Activated B cell treated with CpG ODN at 0.5 μM for 24 hours (primary cell): ENCODE measurements at regions of chr3 and their contacts with region 1.

Region 1: GRCh38 chr3:50971487-50971924 is 296.8 kb downstream of the DOCK3 start:
- DNase-seq: no peak
- ATAC-seq: peak; percentile 67
- H3K4me3 Mint-ChIP-seq: no peak overlapping the region
- H3K27ac Mint-ChIP-seq: no peak overlapping the region
- H3K4me1 Mint-ChIP-seq: peaks cover 2% of the 10 kb centered on the region
- H3K27me3 Mint-ChIP-seq: no peaks in the 10 kb centered on the region
- CTCF ChIP-seq: peak; percentile 95

Region 2: DNA sequence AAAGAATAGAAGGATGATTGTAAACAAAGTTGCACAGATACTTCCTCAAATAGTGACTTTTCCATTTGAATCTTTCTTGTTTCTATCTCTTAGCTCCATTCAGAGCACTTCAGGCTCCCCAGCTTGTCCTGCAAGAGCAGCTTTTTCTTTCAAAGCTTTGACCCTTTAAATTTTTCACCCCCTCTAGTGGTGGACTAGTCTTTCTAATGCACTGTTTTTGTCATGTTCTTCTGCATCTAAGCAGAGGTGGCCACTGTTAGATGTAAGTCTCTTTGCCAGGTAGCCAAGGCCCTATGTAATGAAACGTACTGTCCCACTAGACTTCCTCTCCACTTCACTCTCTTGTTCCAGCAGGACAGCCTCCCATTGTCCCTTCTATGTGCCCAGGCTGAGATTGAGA is 339.5 kb after region 1 on chr3:
- CTCF ChIA-PET with region 1: interaction called, 3 read pairs
- POLR2A ChIA-PET with region 1: no interaction called
- intact Hi-C with region 1: loop called (anchors 2 kb)
- DNase-seq: no peak
- ATAC-seq: no peak
- H3K4me3 Mint-ChIP-seq: no peak overlapping the region
- H3K27ac Mint-ChIP-seq: no peak overlapping the region
- H3K4me1 Mint-ChIP-seq: no peaks in the 10 kb centered on the region
- H3K27me3 Mint-ChIP-seq: peaks cover 10% of the 10 kb centered on the region
- CTCF ChIP-seq: no peak

Region 3: GRCh38 chr3:51371943-51372557 is 400.5 kb after region 1 on chr3:
- CTCF ChIA-PET with region 1: interaction called, 11 read pairs
- POLR2A ChIA-PET with region 1: no interaction called
- intact Hi-C with region 1: no loop called
- DNase-seq: no peak
- ATAC-seq: no peak
- H3K4me3 Mint-ChIP-seq: no peak overlapping the region
- H3K27ac Mint-ChIP-seq: no peak overlapping the region
- H3K4me1 Mint-ChIP-seq: no peaks in the 10 kb centered on the region
- H3K27me3 Mint-ChIP-seq: peaks cover 46% of the 10 kb centered on the region
- CTCF ChIP-seq: no peak